Heart left ventricle (tissue), 16 donors: ENCODE measurements at regions of chr18 and their contacts with region 1.

Region 1: DNA sequence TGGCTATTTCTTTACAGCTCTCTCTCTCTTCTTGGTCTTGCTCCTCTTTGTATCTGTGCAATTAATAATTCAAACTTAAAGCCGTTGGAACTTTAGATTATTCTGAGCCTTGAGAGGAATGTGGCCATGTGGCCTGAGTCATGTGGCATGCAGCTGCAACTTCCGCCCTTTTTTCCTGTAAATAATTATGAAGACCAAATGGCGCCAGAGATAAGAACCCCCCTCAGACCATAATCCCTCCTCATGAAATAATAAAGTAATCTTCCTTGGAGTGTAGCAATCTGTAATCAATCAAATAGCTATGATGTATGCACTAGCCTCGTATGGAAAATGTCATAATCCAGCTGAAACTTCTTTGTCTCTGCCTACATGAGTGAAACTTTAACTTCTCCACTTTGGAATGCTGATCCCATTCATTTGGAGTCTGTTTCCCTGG is 13.5 kb upstream of the TWSG1 start:
- DNase-seq: no peak
- ATAC-seq: no peak
- H3K4me3 ChIP-seq: no peak overlapping the region
- H3K27ac ChIP-seq: no peak overlapping the region
- H3K4me1 ChIP-seq: no peaks in the 10 kb centered on the region
- H3K27me3 ChIP-seq: no peaks in the 10 kb centered on the region
- CTCF ChIP-seq: no peak
- POLR2A ChIP-seq: no peak

Region 2: GRCh38 chr18:9079818-9080528 is 241.1 kb before region 1 on chr18:
- intact Hi-C with region 1: loop called in 1 of 10 experiments (anchors 10 kb)
- DNase-seq: no peak
- ATAC-seq: peak in 2 of 4 donors; percentile 41 to 55
- H3K4me3 ChIP-seq: no peak overlapping the region
- H3K27ac ChIP-seq: peak overlapping the region in 2 of 12 donors; percentile 13 to 84
- H3K4me1 ChIP-seq: peaks cover 0 to 48% (median 0%) of the 10 kb centered on the region in 12 donors
- H3K27me3 ChIP-seq: no peaks in the 10 kb centered on the region
- CTCF ChIP-seq: no peak
- POLR2A ChIP-seq: no peak